ENCODE measurements at regions of chr11 and their contacts with region 1.

Region 1: DNA sequence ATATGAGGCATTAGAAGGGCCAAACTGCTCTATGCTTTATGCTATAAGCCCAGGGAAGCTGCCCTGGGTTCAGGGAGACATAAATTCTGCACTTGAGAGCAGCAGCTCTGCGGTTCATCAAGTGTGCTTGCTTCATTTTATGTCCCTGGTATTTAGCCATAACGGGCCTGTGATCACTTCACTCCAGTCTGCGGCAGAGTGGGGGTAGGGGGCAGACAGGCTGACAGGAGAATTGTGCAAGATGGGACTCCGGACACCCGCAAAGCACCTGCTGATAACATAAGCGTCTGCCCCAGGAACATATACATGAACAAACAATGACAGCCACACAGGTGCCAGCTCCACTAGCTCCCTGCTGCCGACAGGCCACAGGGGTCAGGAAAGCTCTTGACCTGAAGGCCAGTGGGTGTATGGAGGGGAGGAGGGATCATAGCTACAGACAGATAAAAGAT is 56.1 kb downstream of the SMCO4 start:
- DNase-seq: no peak
- ATAC-seq: no peak
- H3K4me3 ChIP-seq: no peak overlapping the region
- H3K27ac ChIP-seq: no peak overlapping the region
- H3K4me1 ChIP-seq: peaks cover 2% of the 10 kb centered on the region
- H3K27me3 ChIP-seq: no peaks in the 10 kb centered on the region
- CTCF ChIP-seq: no peak

Region 2: DNA sequence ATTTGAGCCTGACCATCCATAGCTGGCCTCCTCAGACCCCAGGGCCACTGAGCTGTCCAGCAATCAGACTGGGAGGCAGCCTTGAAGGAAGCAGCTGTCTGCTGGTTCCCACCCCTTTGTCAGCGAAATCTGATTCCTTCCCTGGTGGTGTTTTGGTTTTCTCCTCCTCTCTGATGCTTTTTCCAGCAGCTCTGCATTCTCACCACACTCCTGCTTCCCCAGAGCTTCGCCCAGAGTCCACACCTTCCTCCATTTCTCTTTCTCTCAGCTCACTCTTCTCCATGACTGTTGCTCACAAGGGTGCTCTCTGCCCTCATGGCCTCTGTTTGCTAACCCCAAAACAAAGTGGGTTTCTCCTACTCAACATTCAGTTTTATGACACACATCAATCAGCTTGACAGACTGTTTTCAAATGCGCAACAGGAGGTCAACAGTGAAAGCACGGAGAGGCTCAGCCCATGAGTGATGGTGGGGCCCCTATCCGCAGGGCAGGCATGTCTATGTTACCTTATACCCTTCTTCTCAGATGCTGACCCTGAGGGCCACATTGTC is 648.2 kb before region 1 on chr11:
- CTCF ChIA-PET with region 1: no interaction called
- POLR2A ChIA-PET with region 1: no interaction called
- intact Hi-C with region 1: no loop called
- DNase-seq: no peak
- ATAC-seq: no peak
- H3K4me3 ChIP-seq: no peak overlapping the region
- H3K27ac ChIP-seq: no peak overlapping the region
- H3K4me1 ChIP-seq: no peaks in the 10 kb centered on the region
- H3K27me3 ChIP-seq: peaks cover 9% of the 10 kb centered on the region; the same call in 1 of the 2 replicates
- CTCF ChIP-seq: no peak

Region 3: DNA sequence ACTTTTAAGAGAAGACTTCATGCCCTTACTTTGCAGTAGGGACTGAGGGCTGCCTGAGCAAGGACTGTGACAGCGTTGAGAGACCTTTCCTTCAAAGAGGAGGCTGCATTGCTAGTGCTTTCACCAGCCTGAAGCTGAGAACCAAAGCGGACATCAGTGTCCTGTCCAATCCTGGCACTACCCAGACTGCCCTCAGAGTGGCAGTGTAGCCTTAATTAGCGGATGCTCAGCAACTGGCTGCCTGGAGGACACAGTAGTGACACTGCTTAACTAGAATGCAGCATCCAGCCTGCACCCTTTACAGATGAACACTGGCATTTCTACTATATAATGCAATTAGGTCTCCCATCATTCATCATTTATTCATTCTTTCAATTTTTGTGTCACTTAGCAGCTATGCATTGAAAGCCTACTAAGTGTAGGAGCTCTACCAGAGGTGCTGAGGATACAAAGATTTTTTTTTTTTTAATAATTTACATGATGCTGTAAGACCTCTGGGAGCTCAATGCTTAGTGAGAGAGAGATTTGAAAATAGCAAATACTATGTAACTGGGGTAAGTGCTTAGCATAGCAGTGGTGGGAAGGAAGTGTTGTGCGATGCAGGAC is 252.4 kb before region 1 on chr11:
- CTCF ChIA-PET with region 1: no interaction called
- POLR2A ChIA-PET with region 1: no interaction called
- intact Hi-C with region 1: loop called (anchors 10 kb)
- DNase-seq: peak; percentile 92
- ATAC-seq: peak; percentile 99
- H3K4me3 ChIP-seq: no peak overlapping the region
- H3K27ac ChIP-seq: no peak overlapping the region
- H3K4me1 ChIP-seq: no peaks in the 10 kb centered on the region
- H3K27me3 ChIP-seq: peaks cover 10% of the 10 kb centered on the region
- CTCF ChIP-seq: peak; percentile 97

Region 4: GRCh38 chr11:93524173-93524536 is 37.1 kb after region 1 on chr11:
- CTCF ChIA-PET with region 1: no interaction called
- POLR2A ChIA-PET with region 1: no interaction called
- intact Hi-C with region 1: no loop called
- DNase-seq: no peak
- ATAC-seq: no peak
- H3K4me3 ChIP-seq: no peak overlapping the region
- H3K27ac ChIP-seq: no peak overlapping the region
- H3K4me1 ChIP-seq: peaks cover 8% of the 10 kb centered on the region
- H3K27me3 ChIP-seq: no peaks in the 10 kb centered on the region
- CTCF ChIP-seq: no peak